Activated CD8-positive, alpha-beta memory T cell treated with anti-CD3 and anti-CD28 coated beads, Interleukin-2, amount 10 ng/mL, durations not matched to agents 7 days and 5 days (primary cell): ENCODE measurements at regions of chr22 and their contacts with region 1.

Region 1: GRCh38 chr22:23144932-23145873 is at the start of gene RAB36:
- DNase-seq: peak; percentile 92
- ATAC-seq: peak; percentile 59
- H3K4me3 Mint-ChIP-seq: peak within 1 kb of the TSS; percentile 68
- H3K27ac Mint-ChIP-seq: no peak within 1 kb of the TSS
- H3K4me1 Mint-ChIP-seq: peaks cover 36% of the 10 kb centered on the region
- H3K27me3 Mint-ChIP-seq: no peaks in the 10 kb centered on the region
- total RNA-seq, gene RAB36: 0.26 to 0.37 TPM

Region 2: GRCh38 chr22:23110190-23110913 is 34.9 kb before region 1 on chr22:
- CTCF ChIA-PET with region 1: no interaction called
- DNase-seq: no peak
- ATAC-seq: no peak
- H3K4me3 Mint-ChIP-seq: no peak overlapping the region
- H3K27ac Mint-ChIP-seq: no peak overlapping the region
- H3K4me1 Mint-ChIP-seq: no peaks in the 10 kb centered on the region
- H3K27me3 Mint-ChIP-seq: no peaks in the 10 kb centered on the region

Region 3: DNA sequence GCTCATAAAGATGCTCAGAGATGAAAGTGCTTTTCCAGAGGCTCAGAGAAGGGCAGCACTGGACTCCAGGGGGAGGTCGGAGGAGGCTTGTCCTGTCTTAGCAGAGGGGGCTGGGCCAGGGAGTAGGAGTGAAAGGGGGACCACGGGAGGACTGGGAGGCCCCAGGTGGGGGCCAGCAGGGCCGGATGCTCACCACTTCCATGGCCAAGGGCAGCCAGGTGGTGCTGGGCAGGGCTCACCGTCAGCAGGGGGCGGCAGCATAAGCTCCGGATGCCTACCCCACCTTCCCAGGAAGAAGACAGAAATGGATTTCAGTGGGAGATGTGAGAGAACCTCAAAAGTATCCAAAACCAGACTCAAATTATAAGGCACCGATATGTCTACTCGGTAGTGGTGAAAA is 11.1 kb after region 1 on chr22:
- CTCF ChIA-PET with region 1: interaction called, 13 read pairs
- DNase-seq: no peak
- ATAC-seq: no peak
- H3K4me3 Mint-ChIP-seq: no peak overlapping the region
- H3K27ac Mint-ChIP-seq: no peak overlapping the region
- H3K4me1 Mint-ChIP-seq: peaks cover 8% of the 10 kb centered on the region
- H3K27me3 Mint-ChIP-seq: no peaks in the 10 kb centered on the region

Region 4: DNA sequence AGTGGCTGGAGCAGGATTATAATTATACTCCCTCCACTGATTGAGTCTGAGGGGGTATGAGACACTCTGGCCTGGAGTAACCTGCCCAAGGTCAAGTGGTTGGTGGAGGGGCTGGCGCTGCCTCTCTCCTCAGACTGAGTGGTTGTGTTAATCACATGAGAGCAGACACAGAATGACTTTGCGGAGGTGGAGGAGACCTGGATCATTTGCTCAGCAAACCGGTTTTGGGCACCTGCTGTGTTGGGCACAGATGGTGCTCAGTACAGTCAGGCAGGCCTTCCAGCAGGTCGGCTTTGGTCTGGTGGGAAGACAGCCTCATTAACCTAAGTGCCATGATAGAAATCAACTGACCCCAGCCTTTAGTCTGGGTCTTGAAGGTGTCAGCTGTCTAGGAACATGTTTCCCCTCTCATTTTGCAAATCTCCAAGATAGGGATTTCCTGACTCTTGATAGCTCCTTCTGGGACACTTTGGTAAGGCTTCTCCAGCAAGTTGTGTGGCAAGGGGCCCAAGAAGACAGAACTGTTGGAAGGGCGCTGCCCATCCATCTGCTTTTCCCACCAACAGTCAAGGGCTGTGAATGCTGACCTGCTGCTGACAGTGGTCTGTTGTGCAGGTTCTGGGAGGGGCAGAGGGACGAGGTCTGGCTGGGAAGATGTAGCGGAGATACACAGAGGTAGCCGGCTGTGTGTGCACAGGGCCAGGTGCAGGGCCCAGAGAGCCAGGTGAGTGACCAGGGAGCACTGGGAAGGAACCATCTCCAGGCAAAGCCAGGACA is 47.2 kb after region 1 on chr22:
- CTCF ChIA-PET with region 1: no interaction called
- DNase-seq: no peak
- ATAC-seq: no peak
- H3K4me3 Mint-ChIP-seq: no peak overlapping the region
- H3K27ac Mint-ChIP-seq: no peak overlapping the region
- H3K4me1 Mint-ChIP-seq: no peaks in the 10 kb centered on the region
- H3K27me3 Mint-ChIP-seq: no peaks in the 10 kb centered on the region